Heart left ventricle (tissue), 16 donors: ENCODE measurements at regions of chr18 and their contacts with region 1.

Region 1: DNA sequence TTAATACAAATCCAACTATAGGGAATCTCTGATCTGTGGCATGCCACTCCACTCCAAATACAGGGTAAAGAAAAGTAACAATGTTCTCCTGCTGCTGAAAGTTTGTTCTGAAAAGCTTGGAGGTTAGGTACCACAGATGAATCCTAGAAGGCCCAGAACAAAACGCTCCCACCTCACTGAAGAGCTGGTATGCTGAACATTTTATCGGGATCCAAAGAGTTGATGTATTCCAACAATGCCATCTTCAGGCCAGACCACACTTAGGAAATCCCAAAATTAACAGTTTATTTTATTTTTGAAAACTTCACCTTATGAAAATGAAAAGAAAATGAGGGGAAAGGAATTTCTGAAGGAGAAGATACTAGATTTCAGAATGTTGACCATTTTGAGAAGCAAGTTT is 145.1 kb upstream of the CDH19 start:
- DNase-seq: no peak
- ATAC-seq: peak in 3 of 4 donors; percentile 54 to 66 (median 58)
- H3K4me3 ChIP-seq: no peak overlapping the region
- H3K27ac ChIP-seq: no peak overlapping the region
- H3K4me1 ChIP-seq: no peaks in the 10 kb centered on the region
- H3K27me3 ChIP-seq: no peaks in the 10 kb centered on the region
- CTCF ChIP-seq: peak in 5 of 12 donors; percentile 16 to 46 (median 45)
- POLR2A ChIP-seq: no peak

Region 2: DNA sequence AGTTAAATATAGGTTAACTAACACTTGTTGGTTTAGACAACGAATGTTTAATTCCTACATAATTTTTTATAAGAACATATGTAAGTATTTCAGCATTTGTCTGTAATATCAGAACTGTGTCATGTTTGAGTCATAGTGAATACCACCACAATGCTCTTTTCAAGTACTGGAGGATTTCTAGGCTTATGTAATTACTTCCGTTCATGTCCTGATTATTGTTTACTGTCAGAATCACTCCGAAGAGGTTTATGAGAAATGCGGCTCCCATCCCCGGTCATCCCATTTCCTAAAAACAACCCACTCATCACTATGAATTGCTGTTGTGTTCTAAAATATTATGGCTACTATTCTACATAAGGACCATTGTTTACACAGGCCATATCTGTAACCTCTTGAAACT is 190.3 kb before region 1 on chr18:
- intact Hi-C with region 1: loop called in 1 of 10 experiments (anchors 10 kb)
- DNase-seq: no peak
- ATAC-seq: peak in 1 of 4 donors; percentile 39
- H3K4me3 ChIP-seq: no peak overlapping the region
- H3K27ac ChIP-seq: no peak overlapping the region
- H3K4me1 ChIP-seq: no peaks in the 10 kb centered on the region
- H3K27me3 ChIP-seq: no peaks in the 10 kb centered on the region
- CTCF ChIP-seq: no peak
- POLR2A ChIP-seq: no peak

Region 3: GRCh38 chr18:66582211-66582610 is 166.8 kb before region 1 on chr18:
- intact Hi-C with region 1: loop called in 1 of 10 experiments (anchors 10 kb)
- DNase-seq: no peak
- ATAC-seq: no peak
- H3K4me3 ChIP-seq: no peak overlapping the region
- H3K27ac ChIP-seq: no peak overlapping the region
- H3K4me1 ChIP-seq: peaks cover 0 to 2% (median 0%) of the 10 kb centered on the region in 12 donors
- H3K27me3 ChIP-seq: no peaks in the 10 kb centered on the region
- CTCF ChIP-seq: no peak
- POLR2A ChIP-seq: no peak

Region 4: GRCh38 chr18:66655407-66655806 is 93.6 kb before region 1 on chr18:
- intact Hi-C with region 1: no loop called
- DNase-seq: no peak
- ATAC-seq: no peak
- H3K4me3 ChIP-seq: no peak overlapping the region
- H3K27ac ChIP-seq: no peak overlapping the region
- H3K4me1 ChIP-seq: no peaks in the 10 kb centered on the region
- H3K27me3 ChIP-seq: no peaks in the 10 kb centered on the region
- CTCF ChIP-seq: no peak
- POLR2A ChIP-seq: no peak

Region 5: DNA sequence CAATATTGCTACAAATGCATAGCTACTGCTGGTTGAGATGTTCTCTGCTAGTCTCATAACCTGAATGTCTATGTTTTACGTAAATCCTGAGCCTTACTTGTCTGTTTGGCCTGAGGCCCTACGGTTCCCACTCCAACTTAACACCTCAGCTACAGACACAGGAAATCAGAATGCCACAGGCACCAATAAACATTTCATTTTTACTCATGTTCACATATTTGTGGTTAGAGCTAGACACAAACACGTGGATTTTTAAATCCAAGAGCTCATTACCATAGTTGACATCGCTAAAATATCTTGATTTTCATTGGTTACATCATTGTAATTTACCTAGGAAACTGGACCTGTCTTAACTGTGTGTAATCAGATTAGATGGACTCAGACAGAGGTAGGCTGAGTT is 118.6 kb after region 1 on chr18:
- intact Hi-C with region 1: no loop called
- DNase-seq: no peak
- ATAC-seq: no peak
- H3K4me3 ChIP-seq: no peak overlapping the region
- H3K27ac ChIP-seq: no peak overlapping the region
- H3K4me1 ChIP-seq: no peaks in the 10 kb centered on the region
- H3K27me3 ChIP-seq: no peaks in the 10 kb centered on the region
- CTCF ChIP-seq: no peak
- POLR2A ChIP-seq: no peak

Region 6: DNA sequence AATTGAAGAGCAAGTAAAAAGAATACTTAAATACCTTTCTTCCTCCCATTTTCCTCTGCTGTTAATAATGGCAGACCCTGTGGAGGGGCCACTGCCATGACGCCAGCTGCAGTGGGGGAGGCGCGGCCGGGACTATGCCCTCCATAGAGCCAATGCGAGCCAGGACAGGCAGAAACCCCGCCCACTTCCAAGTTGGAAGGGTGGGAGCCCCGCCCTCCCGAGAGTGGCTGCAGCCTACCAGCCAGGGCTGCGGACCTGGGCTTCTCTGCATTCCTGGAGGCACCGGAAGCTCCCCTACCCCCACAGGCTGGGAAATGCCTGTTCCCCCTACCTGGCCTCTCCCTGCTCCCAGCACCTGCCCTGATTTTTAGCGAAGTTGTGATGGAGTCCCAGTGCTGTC is 294.2 kb after region 1 on chr18:
- intact Hi-C with region 1: no loop called
- DNase-seq: peak in 1 of 5 donors; percentile 35
- ATAC-seq: no peak
- H3K4me3 ChIP-seq: no peak overlapping the region
- H3K27ac ChIP-seq: no peak overlapping the region
- H3K4me1 ChIP-seq: no peaks in the 10 kb centered on the region
- H3K27me3 ChIP-seq: no peaks in the 10 kb centered on the region
- CTCF ChIP-seq: no peak
- POLR2A ChIP-seq: no peak